ENCODE measurements at regions of chr7 and their contacts with region 1.

Region 1: DNA sequence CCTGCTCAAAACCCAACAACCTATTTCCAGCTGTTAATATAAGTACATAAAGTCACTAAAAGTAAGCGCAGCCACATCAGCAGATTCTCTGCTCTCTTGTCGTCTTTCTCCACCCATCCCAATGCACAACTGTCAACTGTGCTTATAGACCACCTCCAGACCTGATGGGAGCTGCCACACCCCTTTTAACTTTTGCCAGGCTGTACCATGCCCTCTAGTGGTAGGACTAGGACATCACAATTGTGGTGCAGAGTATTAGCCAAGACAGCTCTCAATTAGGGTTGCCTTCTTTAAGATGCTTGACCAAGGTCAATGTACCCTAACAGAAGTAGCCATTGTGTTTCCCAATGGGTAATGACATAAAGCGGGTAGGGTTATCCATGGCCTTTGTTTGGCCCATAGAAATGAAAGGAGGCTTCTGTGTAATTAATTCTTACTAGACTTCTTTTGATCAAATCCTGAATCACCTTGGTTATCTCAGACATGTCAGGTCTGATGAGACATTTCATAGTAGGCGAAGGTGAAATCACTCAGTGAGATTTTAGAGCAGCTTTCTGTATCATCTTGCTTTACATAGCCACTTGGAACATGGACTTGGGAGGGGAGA is 68.1 kb downstream of the SCRN1 start:
- DNase-seq: peak; percentile 81
- H3K4me3 ChIP-seq: no peak overlapping the region
- H3K27ac ChIP-seq: no peak overlapping the region
- H3K4me1 ChIP-seq: peaks cover 4% of the 10 kb centered on the region
- H3K27me3 ChIP-seq: no peaks in the 10 kb centered on the region
- CTCF ChIP-seq: peak; percentile 95

Region 2: GRCh38 chr7:29639881-29640595 is 281.5 kb before region 1 on chr7:
- CTCF ChIA-PET with region 1: interaction called, 6 read pairs
- POLR2A ChIA-PET with region 1: no interaction called
- intact Hi-C with region 1: loop called (anchors 10 kb)
- DNase-seq: no peak
- H3K4me3 ChIP-seq: no peak overlapping the region
- H3K27ac ChIP-seq: no peak overlapping the region
- H3K4me1 ChIP-seq: no peaks in the 10 kb centered on the region
- H3K27me3 ChIP-seq: no peaks in the 10 kb centered on the region
- CTCF ChIP-seq: no peak

Region 3: GRCh38 chr7:29748286-29749108 is 173.0 kb before region 1 on chr7:
- CTCF ChIA-PET with region 1: interaction called, 13 read pairs
- POLR2A ChIA-PET with region 1: no interaction called
- intact Hi-C with region 1: loop called (anchors 1 kb)
- DNase-seq: peak; percentile 71
- H3K4me3 ChIP-seq: no peak overlapping the region
- H3K27ac ChIP-seq: no peak overlapping the region
- H3K4me1 ChIP-seq: no peaks in the 10 kb centered on the region
- H3K27me3 ChIP-seq: no peaks in the 10 kb centered on the region
- CTCF ChIP-seq: peak; percentile 72

Region 4: DNA sequence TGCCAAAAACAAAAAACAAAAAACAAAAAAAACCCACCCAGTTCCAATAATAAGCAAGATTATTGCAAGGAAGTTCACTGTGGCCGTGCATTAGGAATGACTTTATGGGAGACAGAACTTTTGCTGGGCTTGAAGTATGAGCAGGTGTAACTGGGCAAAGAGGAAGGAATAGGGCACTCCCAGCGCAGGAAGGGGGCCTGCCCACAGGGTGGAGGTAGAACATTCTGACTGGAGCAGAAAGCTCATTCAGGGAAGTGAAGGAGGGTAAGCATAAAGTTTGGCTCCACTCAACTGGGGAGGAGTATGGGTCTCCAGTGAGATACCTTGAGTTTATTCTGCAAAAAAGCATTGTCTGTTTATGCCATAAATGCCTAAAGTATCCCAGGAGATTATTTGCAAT is 157.3 kb before region 1 on chr7:
- CTCF ChIA-PET with region 1: interaction called, 7 read pairs
- POLR2A ChIA-PET with region 1: no interaction called
- intact Hi-C with region 1: loop called (anchors 5 kb)
- DNase-seq: peak; percentile 7
- H3K4me3 ChIP-seq: no peak overlapping the region
- H3K27ac ChIP-seq: no peak overlapping the region
- H3K4me1 ChIP-seq: no peaks in the 10 kb centered on the region
- H3K27me3 ChIP-seq: no peaks in the 10 kb centered on the region
- CTCF ChIP-seq: peak; percentile 50

Region 5: GRCh38 chr7:29878081-29878688 is 43.3 kb before region 1 on chr7:
- CTCF ChIA-PET with region 1: interaction called, 5 read pairs
- POLR2A ChIA-PET with region 1: no interaction called
- intact Hi-C with region 1: loop called (anchors 2 kb)
- DNase-seq: peak; percentile 66
- H3K4me3 ChIP-seq: no peak overlapping the region
- H3K27ac ChIP-seq: no peak overlapping the region
- H3K4me1 ChIP-seq: no peaks in the 10 kb centered on the region
- H3K27me3 ChIP-seq: no peaks in the 10 kb centered on the region
- CTCF ChIP-seq: peak; percentile 76

Measured in A673 (cell line).